B cell (primary cell): ENCODE measurements at regions of chr2 and their contacts with region 1.

Region 1: GRCh38 chr2:218979846-218980734 is 4.9 kb downstream of the FEV start:
- DNase-seq: peak; percentile 91
- ATAC-seq: peak; percentile 85
- H3K4me3 ChIP-seq: peak overlapping the region in 4 of 5 experiments; percentile 3 to 45 (median 26)
- H3K4me3 Mint-ChIP-seq: peak overlapping the region; percentile 85
- H3K27ac ChIP-seq: no peak overlapping the region
- H3K27ac Mint-ChIP-seq: peak overlapping the region; percentile 63
- H3K4me1 ChIP-seq: peaks cover 37 to 51% of the 10 kb centered on the region in 2 donors
- H3K4me1 Mint-ChIP-seq: peaks cover 28% of the 10 kb centered on the region
- H3K27me3 ChIP-seq: peaks cover 0 to 79% (median 55%) of the 10 kb centered on the region in 4 experiments
- H3K27me3 Mint-ChIP-seq: peaks cover 65% of the 10 kb centered on the region
- CTCF ChIP-seq: peak; percentile 87

Region 2: DNA sequence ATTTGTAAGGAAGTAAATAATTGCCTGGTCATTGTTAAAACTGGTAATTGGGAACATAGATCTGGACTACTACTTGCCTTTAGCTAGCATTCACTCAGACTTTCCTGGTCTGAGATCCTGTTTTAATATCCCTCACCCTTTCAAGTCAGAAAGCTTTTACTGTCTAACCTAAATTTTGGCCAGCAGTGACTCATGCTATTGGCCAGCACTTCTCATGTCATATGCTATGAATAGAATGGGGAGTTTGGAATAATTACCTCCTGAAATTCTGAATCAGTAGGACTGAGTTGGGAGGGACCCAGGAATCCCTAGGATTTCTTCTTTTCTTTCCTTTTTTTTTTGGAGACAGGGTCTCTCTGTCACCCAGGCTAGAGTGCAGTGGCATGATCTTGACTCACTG is 288.9 kb before region 1 on chr2:
- CTCF ChIA-PET with region 1: no interaction called
- POLR2A ChIA-PET with region 1: no interaction called
- intact Hi-C with region 1: no loop called
- DNase-seq: no peak
- ATAC-seq: no peak
- H3K4me3 ChIP-seq: no peak overlapping the region
- H3K4me3 Mint-ChIP-seq: no peak overlapping the region
- H3K27ac ChIP-seq: no peak overlapping the region
- H3K27ac Mint-ChIP-seq: no peak overlapping the region
- H3K4me1 ChIP-seq: no peaks in the 10 kb centered on the region
- H3K4me1 Mint-ChIP-seq: no peaks in the 10 kb centered on the region
- H3K27me3 ChIP-seq: no peaks in the 10 kb centered on the region
- H3K27me3 Mint-ChIP-seq: no peaks in the 10 kb centered on the region
- CTCF ChIP-seq: no peak

Region 3: DNA sequence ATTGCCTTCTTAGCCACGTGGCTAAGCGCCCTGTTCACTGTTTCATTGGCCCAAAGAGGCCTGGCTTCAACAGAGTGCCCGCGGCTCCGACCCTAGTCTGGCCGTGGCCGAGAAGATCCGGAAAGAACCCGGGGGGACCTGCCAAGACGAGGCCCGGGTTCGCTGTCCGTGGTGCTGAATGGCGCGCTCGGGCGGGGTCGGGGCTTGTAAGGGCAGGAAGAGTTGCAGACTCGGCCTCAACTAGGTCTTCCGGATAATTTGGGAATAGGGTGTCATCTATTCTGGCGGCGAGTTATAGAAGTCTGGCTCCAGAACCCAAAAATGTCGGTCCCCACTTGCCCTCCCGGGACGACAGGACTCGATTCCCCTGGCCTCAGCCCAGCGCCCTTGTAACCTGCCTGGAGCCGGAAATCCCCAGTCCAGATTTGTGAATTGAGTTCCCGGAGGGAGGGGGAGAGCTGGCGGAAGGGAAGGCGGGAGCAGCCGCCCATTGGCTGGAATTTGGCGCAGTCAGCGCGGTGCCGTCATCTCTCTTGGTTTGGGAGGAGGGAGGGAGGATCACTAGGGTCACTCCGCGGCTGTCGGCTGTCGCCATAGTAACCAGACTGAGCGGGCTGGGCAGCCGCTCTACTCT is 17.1 kb before region 1 on chr2:
- CTCF ChIA-PET with region 1: interaction called, 17 read pairs
- POLR2A ChIA-PET with region 1: no interaction called
- intact Hi-C with region 1: no loop called
- DNase-seq: peak; percentile 62
- ATAC-seq: no peak
- H3K4me3 ChIP-seq: no peak overlapping the region
- H3K4me3 Mint-ChIP-seq: no peak overlapping the region
- H3K27ac ChIP-seq: no peak overlapping the region
- H3K27ac Mint-ChIP-seq: no peak overlapping the region
- H3K4me1 ChIP-seq: peaks cover 24 to 39% of the 10 kb centered on the region in 2 donors
- H3K4me1 Mint-ChIP-seq: peaks cover 21% of the 10 kb centered on the region
- H3K27me3 ChIP-seq: peaks cover 0 to 66% (median 46%) of the 10 kb centered on the region in 4 experiments
- H3K27me3 Mint-ChIP-seq: peaks cover 59% of the 10 kb centered on the region
- CTCF ChIP-seq: no peak

Region 4: GRCh38 chr2:218995972-218996711 is 16.1 kb after region 1 on chr2:
- CTCF ChIA-PET with region 1: interaction called, 17 read pairs
- POLR2A ChIA-PET with region 1: no interaction called
- intact Hi-C with region 1: no loop called
- DNase-seq: peak; percentile 81
- ATAC-seq: peak; percentile 80
- H3K4me3 ChIP-seq: peak overlapping the region in 1 of 5 experiments; percentile 24
- H3K4me3 Mint-ChIP-seq: peak overlapping the region; percentile 26
- H3K27ac ChIP-seq: no peak overlapping the region
- H3K27ac Mint-ChIP-seq: no peak overlapping the region
- H3K4me1 ChIP-seq: peaks cover 29 to 46% of the 10 kb centered on the region in 2 donors
- H3K4me1 Mint-ChIP-seq: peaks cover 21% of the 10 kb centered on the region
- H3K27me3 ChIP-seq: peaks cover 0 to 91% (median 57%) of the 10 kb centered on the region in 4 experiments
- H3K27me3 Mint-ChIP-seq: peaks cover 60% of the 10 kb centered on the region
- CTCF ChIP-seq: peak; percentile 79

Region 5: DNA sequence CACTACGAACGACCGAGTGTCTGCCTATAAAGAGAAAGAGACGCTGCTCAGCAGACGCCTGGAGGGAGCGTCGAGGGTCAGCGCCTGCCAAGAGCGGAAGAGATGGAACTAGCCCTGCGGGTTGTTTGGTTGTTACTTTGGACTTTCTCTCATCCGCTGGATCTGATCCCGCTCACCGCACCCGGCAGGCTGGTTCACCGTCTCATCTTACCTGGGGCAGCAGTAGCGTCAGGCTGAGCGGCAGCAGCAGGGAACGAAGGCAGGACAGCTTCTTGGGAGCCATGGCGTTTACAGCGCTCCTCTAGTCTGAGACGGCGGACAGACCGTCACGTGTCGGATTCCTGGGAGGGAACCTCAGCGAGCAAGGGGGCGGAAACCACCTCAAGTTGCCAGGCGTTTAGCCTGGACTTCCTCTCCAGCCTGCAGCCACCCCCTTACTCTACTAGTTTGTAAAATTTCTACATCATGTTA is 263.2 kb after region 1 on chr2:
- CTCF ChIA-PET with region 1: no interaction called
- POLR2A ChIA-PET with region 1: no interaction called
- intact Hi-C with region 1: no loop called
- DNase-seq: no peak
- ATAC-seq: no peak
- H3K4me3 ChIP-seq: peak overlapping the region in 1 of 5 experiments; percentile 30
- H3K4me3 Mint-ChIP-seq: peak overlapping the region; percentile 74
- H3K27ac ChIP-seq: no peak overlapping the region
- H3K27ac Mint-ChIP-seq: peak overlapping the region; percentile 71
- H3K4me1 ChIP-seq: peaks cover 32 to 38% of the 10 kb centered on the region in 2 donors
- H3K4me1 Mint-ChIP-seq: peaks cover 42% of the 10 kb centered on the region
- H3K27me3 ChIP-seq: no peaks in the 10 kb centered on the region
- H3K27me3 Mint-ChIP-seq: no peaks in the 10 kb centered on the region
- CTCF ChIP-seq: no peak